Activated CD4-positive, alpha-beta T cell treated with anti-CD3 and anti-CD28 coated beads for 36 hours (primary cell): ENCODE measurements at regions of chr18 and their contacts with region 1.

Region 1: GRCh38 chr18:22933206-22933957 is at the start of gene RBBP8:
- DNase-seq: peak; percentile 89
- ATAC-seq: peak; percentile 76
- H3K4me3 Mint-ChIP-seq: peak within 1 kb of the TSS; percentile 89
- H3K27ac Mint-ChIP-seq: peak within 1 kb of the TSS; percentile 96
- H3K4me1 Mint-ChIP-seq: peaks cover 17% of the 10 kb centered on the region
- H3K27me3 Mint-ChIP-seq: no peaks in the 10 kb centered on the region
- total RNA-seq, gene RBBP8: 74.3 to 101 TPM

Region 2: GRCh38 chr18:22800551-22800951 is 132.8 kb before region 1 on chr18:
- CTCF ChIA-PET with region 1: interaction called, 4 read pairs
- POLR2A ChIA-PET with region 1: no interaction called
- intact Hi-C with region 1: loop called (anchors 2 kb)
- DNase-seq: no peak
- ATAC-seq: no peak
- H3K4me3 Mint-ChIP-seq: no peak overlapping the region
- H3K27ac Mint-ChIP-seq: no peak overlapping the region
- H3K4me1 Mint-ChIP-seq: no peaks in the 10 kb centered on the region
- H3K27me3 Mint-ChIP-seq: peaks cover 2% of the 10 kb centered on the region

Region 3: GRCh38 chr18:22838639-22839277 is 94.6 kb before region 1 on chr18:
- CTCF ChIA-PET with region 1: no interaction called
- POLR2A ChIA-PET with region 1: no interaction called
- intact Hi-C with region 1: no loop called
- DNase-seq: peak; percentile 43
- ATAC-seq: peak; percentile 92
- H3K4me3 Mint-ChIP-seq: no peak overlapping the region
- H3K27ac Mint-ChIP-seq: no peak overlapping the region
- H3K4me1 Mint-ChIP-seq: no peaks in the 10 kb centered on the region
- H3K27me3 Mint-ChIP-seq: peaks cover 2% of the 10 kb centered on the region

Region 4: DNA sequence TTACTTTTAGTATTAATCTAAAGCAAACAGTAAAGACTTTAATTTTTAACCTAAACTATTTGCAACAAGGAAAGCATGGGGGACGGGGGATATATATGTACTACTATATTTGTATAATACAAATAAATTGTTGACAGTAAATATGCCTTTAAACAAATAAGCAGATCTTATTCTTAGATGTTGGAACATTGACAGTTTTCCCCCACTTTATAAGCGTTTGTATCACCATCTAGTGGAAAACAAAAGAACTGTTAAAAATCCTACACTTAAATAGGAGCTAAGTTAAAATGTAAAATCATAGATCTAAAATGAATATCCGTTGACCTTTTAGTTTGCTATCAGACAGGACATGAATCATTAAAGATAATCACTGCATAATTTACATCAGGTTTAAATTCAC is 49.8 kb after region 1 on chr18:
- CTCF ChIA-PET with region 1: interaction called, 30 read pairs
- POLR2A ChIA-PET with region 1: interaction called, 8 read pairs
- intact Hi-C with region 1: loop called (anchors 1 kb)
- DNase-seq: no peak
- ATAC-seq: no peak
- H3K4me3 Mint-ChIP-seq: no peak overlapping the region
- H3K27ac Mint-ChIP-seq: no peak overlapping the region
- H3K4me1 Mint-ChIP-seq: peaks cover 7% of the 10 kb centered on the region
- H3K27me3 Mint-ChIP-seq: no peaks in the 10 kb centered on the region

Region 5: DNA sequence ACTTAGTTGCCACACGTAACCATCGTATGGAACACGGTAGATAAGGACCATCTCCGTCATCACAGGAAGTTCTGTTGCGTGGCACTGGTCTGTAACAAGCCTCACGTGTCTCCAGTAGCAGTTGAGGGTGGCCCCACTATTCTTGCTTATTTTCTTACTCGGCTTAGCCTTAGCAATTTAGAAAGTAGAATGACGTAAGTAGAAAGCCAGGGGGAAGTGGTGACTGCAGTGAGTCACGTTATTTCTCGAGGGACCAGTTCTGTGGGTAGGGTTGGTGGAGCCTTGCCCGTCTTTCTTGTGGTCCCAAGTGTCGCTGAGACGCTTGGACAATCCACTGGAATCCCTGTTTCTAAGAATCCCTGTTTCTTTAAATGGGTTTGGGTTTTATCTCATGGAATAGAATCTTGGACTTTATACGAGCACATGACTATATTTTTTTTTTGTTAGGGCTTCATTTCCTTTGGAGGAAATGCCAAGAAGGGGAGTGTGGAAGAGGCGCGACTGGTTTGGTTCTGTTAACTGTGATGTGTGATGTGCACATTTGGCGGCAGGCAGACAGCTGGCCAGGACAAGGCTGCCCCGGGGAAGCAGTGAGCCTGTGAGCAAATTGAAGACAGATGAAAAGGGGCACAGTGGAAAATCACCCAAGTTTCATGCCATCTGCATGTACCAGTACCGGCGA is 298.1 kb after region 1 on chr18:
- CTCF ChIA-PET with region 1: interaction called, 3 read pairs
- POLR2A ChIA-PET with region 1: no interaction called
- intact Hi-C with region 1: loop called in 1 of 2 experiments (anchors 2 kb)
- DNase-seq: peak; percentile 87
- ATAC-seq: peak; percentile 90
- H3K4me3 Mint-ChIP-seq: peak overlapping the region; percentile 16
- H3K27ac Mint-ChIP-seq: peak overlapping the region; percentile 97
- H3K4me1 Mint-ChIP-seq: peaks cover 54% of the 10 kb centered on the region
- H3K27me3 Mint-ChIP-seq: no peaks in the 10 kb centered on the region

Region 6: DNA sequence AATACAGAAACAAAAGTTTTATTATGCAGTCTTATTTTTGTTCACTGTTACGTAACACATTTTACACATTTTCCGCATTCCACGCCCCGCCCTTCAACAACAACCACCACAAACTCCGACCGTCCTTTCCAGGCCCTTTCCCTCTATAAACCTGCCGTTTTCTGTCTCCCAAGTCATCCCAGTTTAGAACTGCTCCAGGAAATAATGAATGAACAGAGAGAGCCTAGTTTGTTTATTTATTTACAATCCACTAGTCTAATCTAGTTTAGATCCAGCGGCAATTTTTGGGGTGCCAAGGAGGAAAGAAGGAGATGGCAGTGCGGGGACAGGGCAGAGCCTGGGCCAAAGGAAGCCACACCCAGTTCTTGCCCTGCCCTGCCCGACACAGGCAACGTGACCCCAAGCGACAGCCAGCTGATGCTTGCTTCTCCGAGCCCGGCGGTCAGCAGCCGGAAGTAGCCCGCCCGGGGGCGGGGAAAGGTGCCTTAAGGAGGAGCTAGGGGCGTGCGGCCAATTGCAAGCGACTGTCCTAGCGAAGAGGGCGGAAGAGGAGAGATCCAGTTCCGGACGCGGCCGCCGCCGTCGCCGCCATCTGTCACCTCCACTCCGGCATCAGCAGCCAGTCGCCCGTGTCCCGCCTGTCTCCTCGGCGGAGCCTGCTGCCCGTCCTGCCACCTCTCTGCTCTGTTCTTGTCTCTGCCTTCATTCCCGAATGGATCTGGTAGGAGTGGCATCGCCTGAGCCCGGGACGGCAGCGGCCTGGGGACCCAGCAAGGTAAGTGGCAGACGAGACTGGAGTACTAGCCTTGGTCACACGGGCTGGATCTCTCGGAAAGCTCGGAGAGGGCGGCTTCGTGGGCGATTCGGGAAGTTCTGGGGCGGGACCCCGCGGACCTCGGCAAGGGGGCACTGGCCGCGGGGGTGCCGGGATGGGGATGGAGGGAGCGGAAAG is 519.6 kb after region 1 on chr18 and contains the start of gene RIOK3:
- CTCF ChIA-PET with region 1: no interaction called
- POLR2A ChIA-PET with region 1: interaction called, 3 read pairs
- intact Hi-C with region 1: loop called (anchors 1 to 2 kb)
- DNase-seq: peak; percentile 96
- ATAC-seq: peak; percentile 98
- H3K4me3 Mint-ChIP-seq: peak within 1 kb of the TSS; percentile 99
- H3K27ac Mint-ChIP-seq: peak within 1 kb of the TSS; percentile 81
- H3K4me1 Mint-ChIP-seq: peaks cover 42% of the 10 kb centered on the region
- H3K27me3 Mint-ChIP-seq: no peaks in the 10 kb centered on the region
- total RNA-seq, gene RIOK3: 71.1 to 71.2 TPM